Breast epithelium (tissue), 4 donors: ENCODE measurements at regions of chr10 and their contacts with region 1.

Region 1: GRCh38 chr10:91090761-91091529 is 129.5 kb upstream of the PCGF5 start:
- DNase-seq: no peak
- H3K4me3 ChIP-seq: no peak overlapping the region
- H3K27ac ChIP-seq: no peak overlapping the region
- H3K4me1 ChIP-seq: no peaks in the 10 kb centered on the region
- H3K27me3 ChIP-seq: no peaks in the 10 kb centered on the region
- CTCF ChIP-seq: no peak
- POLR2A ChIP-seq: no peak

Region 2: DNA sequence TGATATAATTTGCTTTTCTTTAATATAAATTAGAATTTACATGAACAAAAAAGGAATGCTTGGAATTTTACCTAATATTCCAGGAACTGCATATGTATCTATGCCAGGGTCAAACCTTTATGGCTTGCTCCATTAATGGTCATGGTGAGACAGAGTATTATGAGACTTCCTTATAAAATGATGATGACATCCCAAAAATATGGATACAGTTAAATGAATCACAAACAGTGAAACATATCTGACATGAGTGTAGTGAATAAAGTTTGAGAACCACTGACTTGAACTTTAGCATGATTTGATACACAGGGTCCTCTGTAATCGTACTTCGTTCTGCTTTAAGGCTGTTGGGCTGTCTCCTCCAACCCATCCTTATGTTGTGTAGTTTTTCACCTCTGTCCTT is 1251.9 kb after region 1 on chr10:
- intact Hi-C with region 1: loop called (anchors 10 kb)
- DNase-seq: no peak
- H3K4me3 ChIP-seq: no peak overlapping the region
- H3K27ac ChIP-seq: no peak overlapping the region
- H3K4me1 ChIP-seq: no peaks in the 10 kb centered on the region
- H3K27me3 ChIP-seq: no peaks in the 10 kb centered on the region
- CTCF ChIP-seq: no peak
- POLR2A ChIP-seq: no peak